WTC11 (cell line): ENCODE measurements at regions of chr1 and their contacts with region 1.

Region 1: GRCh38 chr1:15028102-15028501 is 125.4 kb upstream of the TMEM51 start:
- DNase-seq: no peak
- ATAC-seq: no peak
- H3K4me3 Mint-ChIP-seq: no peak overlapping the region
- H3K27ac Mint-ChIP-seq: no peak overlapping the region
- H3K4me1 Mint-ChIP-seq: peaks cover 51% of the 10 kb centered on the region
- H3K27me3 Mint-ChIP-seq: no peaks in the 10 kb centered on the region
- CTCF ChIP-seq: no peak

Region 2: DNA sequence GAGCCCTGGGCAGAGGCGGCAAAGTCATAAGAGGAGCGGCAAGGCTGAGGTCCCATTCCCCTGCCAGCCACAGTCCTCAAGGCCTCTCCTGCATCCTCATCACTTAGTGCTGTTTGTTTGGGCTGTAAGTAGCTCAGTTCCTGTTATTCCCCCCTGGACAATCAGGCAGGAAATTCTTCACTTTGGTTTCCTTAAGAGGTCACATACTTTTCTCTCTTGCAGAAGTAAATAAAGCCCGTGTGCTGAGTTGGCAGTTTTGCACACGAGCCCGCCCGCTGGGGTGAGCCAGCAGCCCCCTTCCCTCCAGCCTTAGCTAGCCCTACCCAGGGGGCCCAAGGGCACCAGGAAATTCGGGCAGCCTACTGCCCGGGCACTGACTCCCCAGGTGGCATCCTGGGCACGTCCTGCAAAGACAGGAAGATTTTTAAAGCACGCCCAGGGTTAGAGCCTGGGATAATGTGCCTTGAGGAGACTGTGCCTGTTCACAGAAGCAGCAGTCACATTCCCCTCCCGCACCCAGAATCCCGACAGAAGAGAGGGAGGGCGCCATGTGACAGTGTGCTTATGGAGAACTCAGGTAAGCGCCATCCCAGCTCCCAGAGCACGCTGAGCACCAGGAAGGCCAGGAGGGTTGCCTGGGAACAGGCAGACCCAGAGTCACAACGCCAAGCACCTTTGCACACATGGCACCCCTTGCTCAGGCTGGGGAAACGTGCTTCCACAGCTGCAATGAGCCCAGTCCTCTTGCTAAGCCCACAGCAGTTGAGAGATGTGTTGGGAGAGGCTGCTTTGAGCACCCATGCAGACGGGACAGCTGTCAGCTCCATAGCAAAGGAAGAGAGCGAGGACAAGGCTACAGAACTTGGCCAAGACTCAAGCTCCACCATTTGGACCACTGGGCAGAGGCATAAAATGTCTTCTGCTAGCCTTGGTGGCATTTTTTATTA is 19.0 kb before region 1 on chr1:
- CTCF ChIA-PET with region 1: interaction called, 16 read pairs
- POLR2A ChIA-PET with region 1: no interaction called
- DNase-seq: no peak
- ATAC-seq: peak; percentile 60
- H3K4me3 Mint-ChIP-seq: no peak overlapping the region
- H3K27ac Mint-ChIP-seq: peak overlapping the region; percentile 79; the same call in 1 of the 2 replicates
- H3K4me1 Mint-ChIP-seq: peaks cover 29% of the 10 kb centered on the region
- H3K27me3 Mint-ChIP-seq: 0 out of 2 replicates have a peak, but pooled peaks cover 3% of the 10 kb centered on the region
- CTCF ChIP-seq: no peak

Region 3: DNA sequence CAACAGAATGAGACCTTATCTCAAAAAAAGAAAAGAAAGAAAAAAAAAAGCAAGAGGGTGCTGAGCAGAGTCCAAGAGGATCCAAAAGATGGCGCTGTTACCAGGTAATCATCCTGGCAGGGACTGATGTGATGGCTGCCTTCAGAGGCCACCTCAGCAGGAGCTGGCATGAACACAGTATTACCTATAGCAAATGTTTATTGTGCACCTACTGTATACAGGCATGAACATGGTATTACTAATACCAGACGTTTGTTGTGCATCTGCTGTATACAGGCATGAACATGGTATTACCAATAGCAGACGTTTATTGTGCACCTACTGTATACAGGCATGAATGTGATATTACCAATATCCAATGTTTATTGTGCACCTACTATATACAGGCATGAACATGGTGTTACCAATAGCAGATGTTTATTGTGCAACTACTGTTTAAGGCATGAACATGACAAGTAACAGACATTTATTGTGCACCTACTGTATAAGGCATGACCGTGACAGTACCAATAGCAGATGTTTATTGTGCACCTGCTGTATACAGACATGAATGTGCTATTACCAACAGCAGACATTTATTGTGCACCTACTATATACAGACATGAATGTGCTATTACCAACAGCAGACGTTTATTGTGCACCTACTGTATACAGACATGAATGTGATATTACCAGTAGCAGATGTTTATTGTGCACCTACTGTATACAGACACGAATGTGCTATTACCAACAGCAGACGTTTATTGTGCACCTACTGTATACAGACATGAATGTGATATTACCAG is 10.3 kb after region 1 on chr1:
- CTCF ChIA-PET with region 1: interaction called, 19 read pairs
- POLR2A ChIA-PET with region 1: no interaction called
- DNase-seq: peak; percentile 34
- ATAC-seq: peak; percentile 84
- H3K4me3 Mint-ChIP-seq: no peak overlapping the region
- H3K27ac Mint-ChIP-seq: no peak overlapping the region
- H3K4me1 Mint-ChIP-seq: peaks cover 8% of the 10 kb centered on the region
- H3K27me3 Mint-ChIP-seq: no peaks in the 10 kb centered on the region
- CTCF ChIP-seq: peak; percentile 43

Region 4: DNA sequence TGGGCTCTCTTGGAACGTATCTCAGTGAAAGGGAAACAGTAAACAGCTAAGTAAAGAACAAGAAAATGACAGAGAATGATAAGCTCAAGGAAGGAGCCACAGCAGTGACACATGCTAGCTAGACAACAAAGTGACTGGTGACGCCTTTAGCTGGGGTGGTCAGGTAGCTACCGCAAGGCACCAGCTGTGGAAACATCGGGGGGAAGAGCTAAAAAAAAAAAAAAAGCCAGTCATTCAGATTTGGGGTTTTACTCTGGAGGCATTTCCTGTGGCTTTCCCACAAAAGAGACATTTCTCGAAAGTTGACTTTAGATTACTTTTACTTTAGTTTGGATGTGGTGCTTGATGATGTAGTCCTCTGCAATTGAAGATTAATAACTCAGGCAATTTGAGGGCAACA is 221.0 kb after region 1 on chr1:
- CTCF ChIA-PET with region 1: no interaction called
- POLR2A ChIA-PET with region 1: no interaction called
- DNase-seq: no peak
- ATAC-seq: no peak
- H3K4me3 Mint-ChIP-seq: no peak overlapping the region
- H3K27ac Mint-ChIP-seq: no peak overlapping the region; the same call in 1 of the 2 replicates
- H3K4me1 Mint-ChIP-seq: peaks cover 38% of the 10 kb centered on the region
- H3K27me3 Mint-ChIP-seq: peaks cover 10% of the 10 kb centered on the region; the same call in 1 of the 2 replicates
- CTCF ChIP-seq: no peak